ENCODE measurements at regions of chr3 and their contacts with region 1.

Region 1: DNA sequence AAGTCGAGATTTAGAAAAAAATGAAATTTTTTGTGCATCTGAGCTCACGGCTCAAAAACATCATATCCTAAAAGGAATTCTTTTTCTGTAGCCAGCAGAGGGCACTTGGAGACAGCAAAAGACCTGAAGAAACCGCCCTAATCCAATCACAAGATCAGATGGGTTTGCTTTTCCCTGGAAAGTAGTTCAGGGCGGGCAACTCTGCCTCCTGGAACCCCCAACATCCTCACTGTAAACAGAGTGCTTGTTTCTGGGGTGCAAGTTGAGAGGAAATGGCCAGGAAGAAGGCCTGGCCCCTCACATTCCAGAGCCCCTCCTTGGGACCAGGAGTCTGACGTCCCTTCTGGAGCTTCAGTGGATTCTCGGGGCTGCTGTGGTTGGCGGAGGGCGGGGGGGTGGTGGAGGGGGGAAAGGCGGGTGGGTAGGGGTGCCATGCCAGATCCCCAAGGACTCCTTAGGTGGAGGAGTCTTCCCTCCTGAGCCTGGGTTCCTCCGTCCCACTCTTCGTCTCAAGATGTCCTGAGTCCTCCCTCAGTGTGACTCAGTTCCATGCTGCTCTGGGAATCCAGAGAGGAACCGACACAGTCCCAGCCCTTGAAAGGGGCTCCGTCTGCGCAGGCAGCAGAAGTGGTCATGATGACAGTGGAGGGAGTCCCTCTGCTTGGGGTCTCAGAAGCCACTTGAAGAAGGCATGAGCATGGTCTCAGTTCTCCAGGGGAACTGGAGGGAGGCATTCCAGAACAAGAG is 35.9 kb downstream of the CCK start:
- DNase-seq: no peak

Region 2: GRCh38 chr3:41881233-41881821 is 348.8 kb before region 1 on chr3:
- intact Hi-C with region 1: no loop called
- DNase-seq: no peak

Region 3: DNA sequence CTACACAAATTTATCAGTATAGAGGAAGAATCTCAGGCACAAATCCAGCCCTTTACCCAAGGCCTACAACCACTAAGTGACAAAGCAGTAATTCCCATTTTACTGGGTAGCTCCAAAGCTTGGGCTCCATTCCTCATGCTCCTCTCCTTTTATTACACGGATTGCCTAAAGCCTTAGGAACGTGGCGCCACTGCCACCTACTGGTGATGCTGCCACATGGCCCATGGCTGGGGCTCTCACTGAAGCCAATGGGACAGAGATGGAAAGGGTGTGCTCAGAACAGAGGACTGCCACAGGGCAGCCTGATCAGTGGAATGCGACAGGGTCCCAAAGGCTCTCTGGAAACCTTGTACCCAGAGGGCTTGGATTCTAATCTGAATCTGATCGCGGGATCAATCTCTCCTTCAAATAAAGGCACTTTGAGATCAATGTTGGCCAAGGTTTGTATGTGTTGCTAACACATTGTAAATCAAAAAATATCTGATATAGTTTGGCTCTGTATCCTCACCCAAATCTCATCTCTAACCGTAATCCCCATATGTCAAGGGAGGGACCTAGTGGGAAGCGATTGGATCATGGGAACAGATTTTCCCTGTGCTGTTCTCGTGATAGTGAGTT is 213.8 kb after region 1 on chr3:
- intact Hi-C with region 1: loop called in 1 of 2 experiments (anchors 5 kb)
- DNase-seq: peak; percentile 94

Region 4: DNA sequence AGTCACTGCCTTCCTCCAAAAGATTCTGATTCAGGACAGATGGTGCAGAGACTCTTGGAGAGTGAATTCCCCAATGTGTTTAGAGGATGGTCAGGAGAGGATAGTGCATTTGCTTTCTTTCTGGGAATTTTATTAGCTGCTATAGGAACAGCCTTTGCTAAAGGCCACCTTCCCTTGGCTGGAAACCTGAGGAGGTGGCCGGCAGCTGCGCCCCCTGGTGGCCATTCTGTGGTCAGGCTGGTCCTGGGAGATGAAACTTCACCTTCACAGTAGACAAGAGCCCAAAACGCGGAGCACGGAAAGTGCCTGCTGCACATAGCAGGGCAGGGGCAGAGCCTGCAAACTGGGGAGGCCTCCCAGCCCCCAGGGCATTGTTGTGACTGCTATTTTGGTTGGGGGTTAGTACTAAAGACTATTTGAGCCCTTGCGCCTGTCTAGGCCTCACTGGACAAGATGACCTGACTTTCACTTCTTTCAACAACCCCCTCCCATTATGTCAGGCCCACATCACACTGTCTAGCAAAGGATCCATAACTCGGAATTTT is 317.4 kb after region 1 on chr3:
- intact Hi-C with region 1: loop called in 1 of 2 experiments (anchors 10 kb)
- DNase-seq: peak; percentile 91

Region 5: GRCh38 chr3:43071313-43071893 is 841.3 kb after region 1 on chr3:
- intact Hi-C with region 1: loop called in 1 of 2 experiments (anchors 10 kb)
- DNase-seq: no peak

Region 6: DNA sequence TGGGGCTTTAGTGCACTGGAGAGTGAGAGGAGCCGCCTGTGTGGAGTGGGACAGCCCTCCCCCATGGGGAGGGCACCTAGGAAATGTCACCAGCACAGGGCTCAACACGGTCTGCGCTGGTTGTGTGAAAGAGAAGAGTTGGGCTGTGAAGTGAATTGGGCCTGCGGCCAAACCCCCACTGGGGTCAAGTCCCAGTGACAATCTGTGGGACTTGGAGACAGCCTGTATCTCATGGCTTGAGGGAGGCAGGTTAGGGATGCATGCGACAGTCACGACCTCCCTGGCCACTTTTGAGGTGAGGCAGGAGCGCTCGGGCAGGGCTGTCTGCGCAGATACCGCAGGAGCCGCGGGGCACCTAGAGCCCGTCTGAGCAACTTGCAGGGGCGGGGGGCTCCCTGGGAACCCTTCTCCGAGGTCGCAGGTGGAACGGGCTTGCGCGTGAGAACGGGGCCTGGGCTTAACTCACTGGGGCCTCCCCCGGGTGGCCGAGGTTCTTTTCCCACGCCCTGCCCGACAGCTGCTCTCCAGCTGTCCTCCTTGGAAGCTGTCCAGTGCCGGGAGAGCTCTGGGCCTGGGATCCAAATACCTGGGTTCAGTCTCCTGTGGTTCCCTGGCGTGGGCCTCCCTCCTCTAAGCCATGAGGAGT is 1133.6 kb after region 1 on chr3:
- intact Hi-C with region 1: no loop called
- DNase-seq: no peak

Measured in posterior vena cava (tissue), 2 donors.